Activated CD4-positive, alpha-beta memory T cell treated with anti-CD3 and anti-CD28 coated beads, Interleukin-2, amount 10 ng/mL, durations not matched to agents 7 days and 5 days (primary cell): ENCODE measurements at regions of chr20 and their contacts with region 1.

Region 1: GRCh38 chr20:35741892-35742740 is at the start of gene RBM39:
- DNase-seq: peak; percentile 100
- H3K4me3 Mint-ChIP-seq: peak within 1 kb of the TSS; percentile 98
- H3K27ac Mint-ChIP-seq: peak within 1 kb of the TSS; percentile 99
- H3K4me1 Mint-ChIP-seq: peaks cover 43% of the 10 kb centered on the region
- H3K27me3 Mint-ChIP-seq: no peaks in the 10 kb centered on the region
- total RNA-seq, gene RBM39: 318 to 331 TPM

Region 2: GRCh38 chr20:35156978-35157377 is 585.1 kb before region 1 on chr20:
- CTCF ChIA-PET with region 1: no interaction called
- POLR2A ChIA-PET with region 1: no interaction called
- DNase-seq: no peak
- H3K4me3 Mint-ChIP-seq: no peak overlapping the region
- H3K27ac Mint-ChIP-seq: no peak overlapping the region
- H3K4me1 Mint-ChIP-seq: peaks cover 11% of the 10 kb centered on the region
- H3K27me3 Mint-ChIP-seq: no peaks in the 10 kb centered on the region

Region 3: DNA sequence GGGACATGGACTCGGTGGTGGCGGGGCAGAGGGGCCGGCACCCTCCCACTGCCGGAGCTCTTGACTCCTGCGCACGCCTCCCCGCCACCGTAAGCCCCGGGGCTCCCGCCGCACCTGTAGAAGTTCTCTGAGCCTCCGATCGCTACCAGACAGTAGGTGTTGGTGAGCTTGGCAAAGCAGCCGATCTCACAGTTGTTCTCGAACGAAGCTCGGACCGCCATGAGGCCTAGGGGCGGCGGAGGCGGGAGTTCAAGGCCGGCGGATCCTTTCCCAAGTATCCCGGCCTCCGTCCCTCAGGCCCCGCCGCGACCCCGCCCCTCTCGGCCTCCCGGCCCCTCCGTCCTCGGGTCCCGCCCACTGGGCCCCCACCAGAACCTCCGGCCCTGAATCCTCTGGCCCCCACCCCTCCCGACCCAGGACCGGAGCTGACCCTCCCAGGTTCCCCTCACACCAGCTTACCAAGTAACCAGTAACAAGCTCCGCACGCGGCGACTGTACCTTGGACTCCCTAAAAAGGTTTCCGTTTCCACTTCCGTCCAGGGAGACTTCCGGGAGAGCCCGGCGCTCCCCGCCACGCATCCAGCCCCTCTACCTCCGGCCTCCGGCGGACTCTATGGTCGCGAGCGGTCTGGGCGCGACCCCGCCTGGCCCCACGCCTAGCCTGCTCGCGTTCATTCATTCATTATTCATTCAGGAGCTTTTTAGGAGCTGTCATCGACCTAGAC is 457.7 kb before region 1 on chr20 and contains the start of gene EIF6:
- CTCF ChIA-PET with region 1: no interaction called
- POLR2A ChIA-PET with region 1: interaction called, 11 read pairs
- DNase-seq: peak; percentile 79
- H3K4me3 Mint-ChIP-seq: peak within 1 kb of the TSS; percentile 91
- H3K27ac Mint-ChIP-seq: peak within 1 kb of the TSS; percentile 89
- H3K4me1 Mint-ChIP-seq: peaks cover 36% of the 10 kb centered on the region
- H3K27me3 Mint-ChIP-seq: no peaks in the 10 kb centered on the region
- total RNA-seq, gene EIF6: 86.1 to 91.3 TPM

Region 4: DNA sequence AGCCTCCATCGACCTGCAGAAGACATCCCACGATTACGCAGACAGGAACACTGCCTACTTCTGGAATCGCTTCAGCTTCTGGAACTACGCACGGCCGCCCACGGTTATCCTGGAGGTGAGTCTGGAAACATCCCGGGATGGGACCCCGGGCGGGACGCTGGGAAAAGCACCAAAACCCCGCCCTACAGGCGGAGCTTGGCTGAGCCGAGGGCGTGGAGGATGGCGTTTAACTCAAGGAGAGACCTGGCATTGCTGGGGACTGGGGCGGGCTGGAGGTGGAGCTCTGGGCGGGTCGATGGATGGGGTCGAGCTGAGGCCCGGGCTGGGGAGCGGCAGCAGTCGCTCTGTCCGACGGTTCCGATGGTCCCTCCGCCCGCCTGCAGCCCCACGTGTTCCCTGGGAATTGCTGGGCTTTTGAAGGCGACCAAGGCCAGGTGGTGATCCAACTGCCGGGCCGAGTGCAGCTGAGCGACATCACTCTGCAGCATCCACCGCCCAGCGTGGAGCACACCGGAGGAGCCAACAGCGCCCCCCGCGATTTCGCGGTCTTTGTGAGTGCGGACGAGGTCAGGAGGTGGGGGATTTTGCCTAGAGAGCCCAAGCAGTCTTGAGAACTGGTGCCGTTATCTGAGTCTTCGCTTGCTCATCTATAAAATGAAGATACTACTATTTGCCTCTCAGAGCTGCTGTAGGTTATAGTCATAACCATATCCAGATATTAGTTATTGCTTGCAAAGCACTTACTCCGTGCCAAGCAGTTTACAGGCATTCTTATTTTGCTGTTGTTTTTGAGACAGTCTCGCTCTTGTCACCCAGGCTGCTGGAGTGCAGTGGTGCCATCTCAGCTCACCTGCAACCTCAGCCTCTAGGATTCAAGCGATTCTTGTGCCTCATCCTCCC is 122.7 kb before region 1 on chr20:
- CTCF ChIA-PET with region 1: interaction called, 7 read pairs
- POLR2A ChIA-PET with region 1: interaction called, 77 read pairs
- DNase-seq: peak; percentile 78
- H3K4me3 Mint-ChIP-seq: peak overlapping the region; percentile 83
- H3K27ac Mint-ChIP-seq: peak overlapping the region; percentile 70
- H3K4me1 Mint-ChIP-seq: peaks cover 45% of the 10 kb centered on the region
- H3K27me3 Mint-ChIP-seq: peaks cover 1% of the 10 kb centered on the region

Region 5: DNA sequence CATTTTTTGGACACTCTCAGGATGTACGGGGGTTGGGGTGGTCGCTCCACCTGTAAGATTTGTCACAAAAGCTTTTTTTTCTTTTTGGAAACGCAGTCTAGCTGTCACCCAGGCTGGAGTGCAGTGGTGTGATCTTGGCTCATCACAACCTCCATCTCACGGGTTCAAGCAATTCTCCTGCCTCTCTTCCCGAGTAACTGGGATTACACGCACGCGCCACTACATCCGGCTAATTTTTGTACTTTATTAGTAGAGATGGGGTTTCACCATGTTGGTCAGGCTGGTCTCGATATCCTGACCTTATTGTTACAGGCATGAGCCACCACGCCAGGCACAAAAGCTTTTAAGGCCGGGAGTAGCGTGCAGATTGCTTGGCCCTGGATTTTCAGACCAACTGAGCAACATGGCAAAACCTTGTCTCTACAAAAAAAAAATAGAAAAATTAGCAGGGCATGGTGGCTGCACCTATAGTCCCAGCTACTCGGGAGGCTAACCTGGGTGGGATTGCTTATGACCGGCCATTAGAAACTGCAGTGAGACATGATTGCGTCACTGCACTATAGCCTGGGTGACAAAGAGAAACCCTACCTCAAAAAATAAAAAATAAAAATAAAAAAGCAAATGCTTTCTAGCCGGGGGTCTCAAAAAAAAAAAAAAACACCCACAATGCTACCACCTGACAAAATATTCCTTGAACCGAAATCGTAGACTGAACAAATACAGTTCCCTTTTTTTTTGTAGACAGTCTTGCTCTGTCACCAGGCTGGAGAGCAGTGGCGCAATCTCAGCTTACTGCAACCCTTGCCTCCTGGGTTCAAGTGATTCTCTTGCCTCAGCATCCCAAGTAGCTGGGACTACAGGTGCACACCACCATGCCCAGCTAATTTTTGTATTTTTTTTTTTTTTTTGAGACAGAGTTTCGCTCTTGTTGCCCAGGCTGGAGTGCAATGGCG is 15.1 kb before region 1 on chr20:
- CTCF ChIA-PET with region 1: interaction called, 7 read pairs
- POLR2A ChIA-PET with region 1: interaction called, 503 read pairs
- DNase-seq: no peak
- H3K4me3 Mint-ChIP-seq: no peak overlapping the region
- H3K27ac Mint-ChIP-seq: no peak overlapping the region
- H3K4me1 Mint-ChIP-seq: peaks cover 46% of the 10 kb centered on the region
- H3K27me3 Mint-ChIP-seq: no peaks in the 10 kb centered on the region

Region 6: GRCh38 chr20:35771689-35772562 is 29.8 kb after region 1 on chr20 and contains the start of gene PHF20:
- CTCF ChIA-PET with region 1: interaction called, 71 read pairs
- POLR2A ChIA-PET with region 1: interaction called, 516 read pairs
- DNase-seq: peak; percentile 99
- H3K4me3 Mint-ChIP-seq: peak within 1 kb of the TSS; percentile 77
- H3K27ac Mint-ChIP-seq: peak within 1 kb of the TSS; percentile 79
- H3K4me1 Mint-ChIP-seq: peaks cover 65% of the 10 kb centered on the region
- H3K27me3 Mint-ChIP-seq: no peaks in the 10 kb centered on the region
- total RNA-seq, gene PHF20: 42.7 to 48.3 TPM

Region 7: DNA sequence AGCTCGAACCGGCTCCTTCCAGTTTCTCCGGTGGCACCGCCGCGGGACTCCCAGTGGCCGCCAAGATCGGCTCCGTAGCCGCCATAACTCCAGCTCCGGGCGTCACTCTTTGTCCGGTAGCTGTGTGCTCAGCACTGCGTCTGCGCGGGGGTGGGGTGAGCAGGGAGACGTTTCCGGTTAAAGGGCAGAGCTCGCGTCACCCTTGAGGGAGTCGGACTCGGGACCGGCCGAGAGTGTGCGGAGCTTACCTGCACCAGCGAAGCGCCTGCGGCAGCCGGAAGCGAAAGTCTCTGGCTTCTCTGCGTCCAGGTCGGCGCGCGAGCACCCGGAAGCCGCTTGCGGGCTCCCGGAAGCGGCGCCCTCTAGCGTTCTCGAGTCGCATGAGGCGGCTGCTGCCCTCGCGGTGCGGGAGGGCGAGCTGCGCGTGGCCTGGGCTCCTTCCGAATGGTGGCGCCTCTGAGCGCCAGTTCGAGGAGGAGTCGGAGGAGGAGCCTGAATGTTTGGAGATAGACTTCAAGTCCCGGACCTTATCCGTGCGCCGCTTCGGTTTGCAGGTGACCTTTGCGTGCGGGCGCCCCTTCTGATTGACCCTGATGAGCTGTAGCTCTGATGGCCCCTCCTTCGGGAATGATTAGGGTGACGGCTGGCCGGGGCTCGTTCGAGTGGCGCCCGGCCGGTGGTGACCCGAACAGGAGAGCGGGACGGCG is 212.2 kb after region 1 on chr20 and contains the start of gene SCAND1:
- CTCF ChIA-PET with region 1: interaction called, 49 read pairs
- POLR2A ChIA-PET with region 1: interaction called, 133 read pairs
- DNase-seq: peak; percentile 97
- H3K4me3 Mint-ChIP-seq: peak within 1 kb of the TSS; percentile 99
- H3K27ac Mint-ChIP-seq: peak within 1 kb of the TSS; percentile 100
- H3K4me1 Mint-ChIP-seq: peaks cover 25% of the 10 kb centered on the region
- H3K27me3 Mint-ChIP-seq: no peaks in the 10 kb centered on the region
- total RNA-seq, gene SCAND1: 65.5 to 70.0 TPM